ENCODE measurements at regions of chr3 and their contacts with region 1.

Region 1: DNA sequence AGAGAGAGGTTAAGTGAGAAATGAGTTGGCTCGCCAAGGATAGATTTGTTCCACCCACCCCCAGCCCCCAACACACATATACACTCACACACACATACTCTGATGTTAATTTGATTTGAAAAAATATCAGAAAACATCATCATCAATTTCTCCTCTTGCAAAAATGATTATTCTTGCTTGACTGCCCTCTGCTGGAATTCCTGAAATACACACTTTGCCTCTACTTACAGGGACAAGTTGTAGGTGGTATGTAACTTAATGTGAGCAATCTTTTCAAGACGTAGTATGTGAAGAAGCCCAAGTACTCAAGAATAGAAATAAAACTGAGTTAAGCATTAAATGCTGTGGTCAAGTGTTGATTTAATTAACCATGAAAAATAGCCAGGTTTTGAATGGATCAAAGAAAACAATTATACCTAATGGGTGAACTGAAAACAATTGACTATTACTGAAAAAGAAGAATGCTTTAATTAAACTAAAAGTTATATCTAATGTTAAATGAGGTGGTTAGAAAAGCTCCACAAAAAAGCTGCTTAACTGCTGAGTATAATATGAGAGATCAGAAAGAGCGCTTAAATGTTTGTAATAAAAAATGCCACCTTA is 46.6 kb upstream of the MDFIC2 start:
- DNase-seq: peak; percentile 19
- H3K4me3 ChIP-seq: no peak overlapping the region
- H3K27ac ChIP-seq: no peak overlapping the region
- H3K4me1 ChIP-seq: no peaks in the 10 kb centered on the region
- H3K27me3 ChIP-seq: no peaks in the 10 kb centered on the region
- CTCF ChIP-seq: peak; percentile 44

Region 2: GRCh38 chr3:70120357-70121121 is 238.5 kb before region 1 on chr3:
- intact Hi-C with region 1: loop called (anchors 2 kb)
- DNase-seq: peak; percentile 84
- H3K4me3 ChIP-seq: no peak overlapping the region
- H3K27ac ChIP-seq: no peak overlapping the region
- H3K4me1 ChIP-seq: no peaks in the 10 kb centered on the region
- H3K27me3 ChIP-seq: no peaks in the 10 kb centered on the region
- CTCF ChIP-seq: peak; percentile 63

Region 3: DNA sequence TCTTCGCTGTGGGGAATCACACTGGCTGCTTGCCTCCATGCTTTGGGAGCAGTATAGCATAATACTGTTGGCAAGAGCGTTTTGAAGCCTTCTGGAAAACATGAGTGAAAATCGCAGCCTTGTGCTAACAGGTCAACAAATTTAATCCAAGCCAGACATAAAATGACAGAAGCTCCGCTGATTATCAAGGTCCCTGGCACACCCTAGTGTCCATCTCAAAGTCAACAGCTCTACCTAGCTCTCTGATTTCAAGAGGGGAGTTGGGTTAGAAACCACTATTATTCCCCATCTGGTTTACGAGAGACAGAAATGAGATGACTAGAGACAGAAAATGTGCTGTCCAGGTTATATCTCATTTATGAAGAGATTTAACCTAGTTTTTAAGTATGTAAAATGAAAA is 27.0 kb after region 1 on chr3:
- intact Hi-C with region 1: no loop called
- DNase-seq: no peak
- H3K4me3 ChIP-seq: no peak overlapping the region
- H3K27ac ChIP-seq: no peak overlapping the region
- H3K4me1 ChIP-seq: no peaks in the 10 kb centered on the region
- H3K27me3 ChIP-seq: no peaks in the 10 kb centered on the region
- CTCF ChIP-seq: no peak

Region 4: DNA sequence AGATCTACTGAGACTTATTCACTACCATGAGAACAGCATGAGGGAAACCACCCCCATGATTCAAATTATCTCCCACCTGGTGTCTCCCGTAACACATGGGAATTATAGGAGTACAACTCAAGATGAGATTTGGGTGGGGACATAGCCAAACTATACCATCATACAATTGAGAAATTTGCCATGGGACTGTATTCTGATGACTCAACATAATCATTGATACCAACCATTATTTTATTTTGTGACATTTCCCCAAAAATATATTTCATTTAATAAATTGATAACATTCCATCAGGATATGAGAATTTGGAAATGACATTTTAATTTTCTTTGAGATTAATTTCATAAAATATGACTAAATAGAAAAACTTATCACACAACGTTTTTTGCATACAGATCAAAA is 49.9 kb after region 1 on chr3:
- intact Hi-C with region 1: no loop called
- DNase-seq: no peak
- H3K4me3 ChIP-seq: no peak overlapping the region
- H3K27ac ChIP-seq: no peak overlapping the region
- H3K4me1 ChIP-seq: no peaks in the 10 kb centered on the region
- H3K27me3 ChIP-seq: no peaks in the 10 kb centered on the region
- CTCF ChIP-seq: no peak